Gastrocnemius medialis (tissue), 4 donors: ENCODE measurements at regions of chr7 and their contacts with region 1.

Region 1: GRCh38 chr7:24572997-24573625 is at the start of gene PALS2:
- DNase-seq: peak; percentile 63 to 66
- ATAC-seq: peak; percentile 81 to 85
- H3K4me3 ChIP-seq: peak within 1 kb of the TSS; percentile 70 to 96 (median 84)
- H3K27ac ChIP-seq: peak within 1 kb of the TSS; percentile 95 to 97 (median 96)
- H3K4me1 ChIP-seq: peaks cover 19 to 33% of the 10 kb centered on the region in 2 donors
- H3K27me3 ChIP-seq: no peaks in the 10 kb centered on the region
- CTCF ChIP-seq: no peak
- POLR2A ChIP-seq: peak; percentile 73 to 75
- total RNA-seq, gene PALS2: 11.2 to 17.3 (median 12.4) TPM

Region 2: DNA sequence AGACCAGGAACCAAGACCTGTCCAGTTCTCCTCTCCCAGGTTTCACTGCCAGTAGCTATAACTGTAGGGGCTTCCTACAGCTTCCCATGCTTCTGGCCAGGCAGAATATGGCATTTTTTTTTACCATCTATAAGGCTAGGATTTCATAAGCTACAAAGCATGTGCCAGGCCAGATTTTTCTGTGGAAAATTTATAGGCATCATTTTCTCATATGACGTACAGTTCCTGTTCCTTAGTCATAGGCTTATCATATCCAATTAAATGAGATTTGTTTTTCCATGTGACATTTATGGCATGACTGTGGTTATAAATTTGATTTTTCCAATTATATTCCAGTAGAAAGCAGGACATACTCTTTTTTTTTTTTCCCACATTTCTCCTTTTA is 497.7 kb before region 1 on chr7:
- in situ Hi-C with region 1: no loop called
- intact Hi-C with region 1: no loop called
- DNase-seq: no peak
- ATAC-seq: no peak
- H3K4me3 ChIP-seq: no peak overlapping the region
- H3K27ac ChIP-seq: no peak overlapping the region
- H3K4me1 ChIP-seq: no peaks in the 10 kb centered on the region
- H3K27me3 ChIP-seq: no peaks in the 10 kb centered on the region
- CTCF ChIP-seq: no peak
- POLR2A ChIP-seq: no peak

Region 3: GRCh38 chr7:24401628-24402593 is 171.2 kb before region 1 on chr7:
- in situ Hi-C with region 1: no loop called
- intact Hi-C with region 1: loop called (anchors 5 kb)
- DNase-seq: no peak
- ATAC-seq: peak; percentile 58 to 70
- H3K4me3 ChIP-seq: peak overlapping the region in 3 of 4 donors; percentile 17 to 39 (median 27)
- H3K27ac ChIP-seq: no peak overlapping the region
- H3K4me1 ChIP-seq: no peaks in the 10 kb centered on the region
- H3K27me3 ChIP-seq: no peaks in the 10 kb centered on the region
- CTCF ChIP-seq: peak in 3 of 5 experiments; percentile 27 to 41 (median 41)
- POLR2A ChIP-seq: no peak

Region 4: GRCh38 chr7:24722386-24723177 is 149.5 kb after region 1 on chr7:
- in situ Hi-C with region 1: no loop called
- intact Hi-C with region 1: loop called (anchors 5 kb)
- DNase-seq: no peak
- ATAC-seq: peak; percentile 23 to 53
- H3K4me3 ChIP-seq: no peak overlapping the region
- H3K27ac ChIP-seq: no peak overlapping the region
- H3K4me1 ChIP-seq: peaks cover 0 to 6% of the 10 kb centered on the region in 2 donors
- H3K27me3 ChIP-seq: no peaks in the 10 kb centered on the region
- CTCF ChIP-seq: peak in 3 of 5 experiments; percentile 12 to 41 (median 38)
- POLR2A ChIP-seq: no peak

Region 5: DNA sequence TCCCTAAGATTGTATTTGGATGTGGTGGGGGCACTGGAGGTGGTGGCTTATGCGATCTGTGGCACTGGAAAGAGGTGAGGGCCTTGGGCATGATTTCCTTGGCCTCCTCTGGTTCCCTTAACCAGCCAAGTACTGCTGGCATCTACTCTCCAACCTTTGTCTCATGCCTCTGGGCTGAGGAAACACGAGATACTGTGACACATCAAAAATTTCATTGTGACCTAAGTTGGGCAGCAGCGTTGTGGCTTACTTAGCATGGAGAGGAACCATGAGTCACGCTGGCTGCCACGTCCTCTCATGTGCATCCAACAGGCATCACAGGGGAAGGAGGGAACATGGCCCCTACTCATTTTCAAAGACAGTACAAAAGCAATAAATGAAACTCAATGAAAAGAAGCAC is 213.8 kb after region 1 on chr7:
- in situ Hi-C with region 1: no loop called
- intact Hi-C with region 1: loop called (anchors 5 kb)
- DNase-seq: peak; percentile 85 to 90
- ATAC-seq: peak; percentile 98
- H3K4me3 ChIP-seq: no peak overlapping the region
- H3K27ac ChIP-seq: peak overlapping the region; percentile 68 to 78 (median 74)
- H3K4me1 ChIP-seq: peaks cover 7 to 15% of the 10 kb centered on the region in 2 donors
- H3K27me3 ChIP-seq: no peaks in the 10 kb centered on the region
- CTCF ChIP-seq: no peak
- POLR2A ChIP-seq: peak in 1 of 2 donors; percentile 15

Region 6: DNA sequence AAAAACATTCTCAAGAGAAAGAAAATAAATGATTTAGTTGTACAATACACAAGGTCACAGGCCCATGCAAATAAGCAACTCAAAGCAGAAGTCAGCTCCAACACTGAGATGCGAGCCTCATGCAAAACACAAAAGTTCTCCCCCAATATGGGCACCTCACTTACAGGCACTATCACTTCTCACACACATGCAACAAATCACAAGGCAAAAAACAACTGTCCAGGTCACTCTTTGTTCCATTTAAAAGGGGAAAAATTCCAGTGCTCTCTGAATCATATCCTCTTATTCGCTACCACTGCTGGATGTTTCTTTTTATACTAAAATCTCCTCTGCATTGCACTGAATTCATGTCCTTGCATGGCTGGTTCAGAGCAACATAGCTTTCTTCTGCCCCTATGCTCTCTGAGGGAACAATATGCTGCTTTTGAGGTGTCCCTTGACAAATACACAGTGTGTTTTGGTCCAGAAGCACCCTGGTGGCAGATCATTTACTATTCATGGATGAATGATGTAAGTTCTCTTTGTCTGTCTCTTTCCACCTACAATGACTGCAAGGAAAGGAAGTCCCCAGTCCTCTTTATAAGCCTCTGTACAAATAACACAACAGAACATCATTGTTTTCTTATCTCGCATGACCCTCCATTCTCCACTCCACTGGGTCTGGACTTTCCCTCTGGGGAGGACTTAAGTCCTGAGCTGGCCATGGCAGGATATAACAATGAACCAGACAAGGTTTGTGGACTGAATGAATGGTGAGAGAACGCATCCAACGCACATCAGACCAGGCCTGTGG is 269.5 kb after region 1 on chr7:
- in situ Hi-C with region 1: no loop called
- intact Hi-C with region 1: no loop called
- DNase-seq: no peak
- ATAC-seq: no peak
- H3K4me3 ChIP-seq: no peak overlapping the region
- H3K27ac ChIP-seq: no peak overlapping the region
- H3K4me1 ChIP-seq: no peaks in the 10 kb centered on the region
- H3K27me3 ChIP-seq: no peaks in the 10 kb centered on the region
- CTCF ChIP-seq: no peak
- POLR2A ChIP-seq: no peak

Region 7: DNA sequence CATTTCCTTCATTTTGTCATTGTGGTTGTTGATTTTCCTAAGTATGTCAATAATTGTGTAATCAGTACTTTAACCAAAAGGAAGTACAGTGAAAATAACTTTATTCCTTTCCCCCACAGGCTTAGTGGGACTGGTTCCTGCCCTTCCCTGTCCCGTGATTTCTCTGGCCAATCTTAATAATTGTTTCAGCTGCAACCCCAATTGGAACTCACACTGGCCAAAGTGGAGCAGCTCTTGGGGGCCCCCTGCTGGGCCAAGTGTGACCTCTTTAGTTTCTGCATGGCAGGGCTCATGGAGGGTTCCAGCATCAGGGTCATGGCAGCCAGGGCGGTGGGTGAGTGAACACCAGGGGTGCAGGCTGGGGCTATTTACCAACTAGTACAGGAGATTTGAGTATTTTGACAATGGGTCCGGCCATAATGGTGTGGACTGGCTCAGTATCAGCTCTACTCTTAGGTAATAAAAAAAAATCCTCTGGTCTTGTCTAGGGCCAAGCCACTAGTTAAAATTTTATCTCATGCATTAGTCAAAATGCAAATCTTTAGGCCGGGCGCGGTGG is 520.2 kb after region 1 on chr7:
- in situ Hi-C with region 1: no loop called
- intact Hi-C with region 1: loop called (anchors 10 kb)
- DNase-seq: peak in 1 of 2 donors; percentile 27
- ATAC-seq: peak in 1 of 2 donors; percentile 47
- H3K4me3 ChIP-seq: no peak overlapping the region
- H3K27ac ChIP-seq: no peak overlapping the region
- H3K4me1 ChIP-seq: peaks cover 0 to 4% of the 10 kb centered on the region in 2 donors
- H3K27me3 ChIP-seq: no peaks in the 10 kb centered on the region
- CTCF ChIP-seq: peak in 4 of 5 experiments; percentile 31 to 63 (median 42)
- POLR2A ChIP-seq: no peak

Region 8: DNA sequence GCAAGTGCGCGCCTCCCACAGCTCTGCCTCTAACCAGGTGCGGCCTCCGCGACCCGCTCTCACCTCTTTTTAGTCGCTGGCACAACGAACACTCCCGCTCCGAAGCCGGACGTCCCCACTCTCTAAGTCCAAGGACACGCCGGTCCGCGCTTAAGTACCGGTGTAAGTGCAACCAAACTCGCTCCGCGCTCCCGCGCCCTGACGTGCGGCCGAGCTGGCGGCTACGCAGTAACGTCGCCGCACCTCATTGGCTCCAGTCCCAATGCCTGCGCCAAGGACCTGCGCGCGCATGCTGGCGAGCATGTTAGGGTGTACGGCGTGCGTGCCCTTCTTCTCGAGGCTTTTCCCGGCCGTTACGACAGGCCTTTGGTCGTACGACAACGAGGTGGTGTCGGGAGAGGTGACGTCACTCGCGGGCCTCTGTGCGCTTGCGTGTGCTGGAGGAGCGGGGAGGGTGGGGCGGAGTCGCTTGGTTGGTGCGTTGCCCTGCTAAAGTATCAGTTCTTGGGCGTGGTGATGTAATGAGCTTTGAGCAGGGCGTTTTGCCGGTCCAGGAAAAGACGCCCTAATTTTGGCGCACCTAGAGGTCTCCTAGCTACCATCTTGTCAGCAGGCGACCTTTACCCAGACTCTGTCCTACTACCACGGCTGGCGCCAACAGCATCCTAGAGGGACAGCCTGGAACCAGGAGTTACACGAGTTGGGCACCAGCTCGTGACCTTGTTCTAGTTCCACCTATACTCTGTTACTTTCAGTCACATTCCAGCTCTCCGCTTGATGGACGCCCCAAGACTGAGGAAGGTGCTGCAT is 552.2 kb after region 1 on chr7 and contains the start of gene CYCS:
- in situ Hi-C with region 1: no loop called
- intact Hi-C with region 1: loop called (anchors 1 kb)
- DNase-seq: peak; percentile 99
- ATAC-seq: peak; percentile 94 to 95
- H3K4me3 ChIP-seq: peak within 1 kb of the TSS; percentile 63 to 96 (median 92)
- H3K27ac ChIP-seq: peak within 1 kb of the TSS; percentile 91 to 99 (median 98)
- H3K4me1 ChIP-seq: peaks cover 24% of the 10 kb centered on the region in 2 donors
- H3K27me3 ChIP-seq: no peaks in the 10 kb centered on the region
- CTCF ChIP-seq: peak in 1 of 5 experiments; percentile 12
- POLR2A ChIP-seq: peak; percentile 96 to 99
- total RNA-seq, gene CYCS: 97.9 to 186 (median 109) TPM